Heart right ventricle (tissue), 16 donors: ENCODE measurements at regions of chr9 and their contacts with region 1.

Region 1: DNA sequence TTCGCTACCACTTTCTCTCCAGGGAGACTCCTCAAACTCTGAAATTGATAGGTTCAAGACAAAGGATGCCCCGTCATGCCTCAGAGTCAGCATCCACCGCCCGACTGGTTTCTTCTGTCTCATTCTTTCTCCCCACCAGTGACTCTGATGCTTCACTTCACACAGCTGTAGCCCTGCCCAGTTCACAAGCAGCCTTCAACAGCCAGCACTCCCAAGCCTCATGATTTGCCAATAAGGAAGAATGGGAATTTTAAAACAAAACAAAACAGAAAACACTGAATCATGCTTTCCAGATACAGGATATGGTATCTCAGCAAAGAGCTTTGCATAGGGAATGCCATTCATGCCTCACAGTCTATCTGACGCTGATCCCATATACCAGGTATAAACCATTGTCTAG is 371.2 kb upstream of the RORB start:
- DNase-seq: no peak
- ATAC-seq: no peak
- H3K4me3 ChIP-seq: no peak overlapping the region
- H3K27ac ChIP-seq: no peak overlapping the region
- H3K4me1 ChIP-seq: no peaks in the 10 kb centered on the region
- H3K27me3 ChIP-seq: no peaks in the 10 kb centered on the region
- CTCF ChIP-seq: no peak

Region 2: GRCh38 chr9:74056023-74056422 is 69.9 kb before region 1 on chr9:
- intact Hi-C with region 1: no loop called
- DNase-seq: no peak
- ATAC-seq: no peak
- H3K4me3 ChIP-seq: no peak overlapping the region
- H3K27ac ChIP-seq: no peak overlapping the region
- H3K4me1 ChIP-seq: no peaks in the 10 kb centered on the region
- H3K27me3 ChIP-seq: no peaks in the 10 kb centered on the region
- CTCF ChIP-seq: no peak

Region 3: GRCh38 chr9:74609671-74610405 is 483.9 kb after region 1 on chr9:
- intact Hi-C with region 1: loop called in 1 of 10 experiments (anchors 10 kb)
- DNase-seq: no peak
- ATAC-seq: no peak
- H3K4me3 ChIP-seq: no peak overlapping the region
- H3K27ac ChIP-seq: no peak overlapping the region
- H3K4me1 ChIP-seq: no peaks in the 10 kb centered on the region
- H3K27me3 ChIP-seq: peaks cover 0 to 3% (median 0%) of the 10 kb centered on the region in 7 donors
- CTCF ChIP-seq: no peak